Dorsolateral prefrontal cortex (tissue), 120 donors: ENCODE measurements at regions of chr7 and their contacts with region 1.

Region 1: GRCh38 chr7:123534383-123535260 is at the start of gene IQUB:
- DNase-seq: peak; percentile 90 to 97 (median 96)
- H3K4me3 ChIP-seq: peak within 1 kb of the TSS; percentile 41 to 82 (median 71)
- H3K27ac ChIP-seq: peak within 1 kb of the TSS in 52 of 59 donors; percentile 4 to 89 (median 74)
- H3K27me3 ChIP-seq: no peaks in the 10 kb centered on the region
- CTCF ChIP-seq: peak in 7 of 56 donors; percentile 3 to 46 (median 15)
- total RNA-seq, gene IQUB: 2.3 to 9.4 (median 5.3) TPM

Region 2: DNA sequence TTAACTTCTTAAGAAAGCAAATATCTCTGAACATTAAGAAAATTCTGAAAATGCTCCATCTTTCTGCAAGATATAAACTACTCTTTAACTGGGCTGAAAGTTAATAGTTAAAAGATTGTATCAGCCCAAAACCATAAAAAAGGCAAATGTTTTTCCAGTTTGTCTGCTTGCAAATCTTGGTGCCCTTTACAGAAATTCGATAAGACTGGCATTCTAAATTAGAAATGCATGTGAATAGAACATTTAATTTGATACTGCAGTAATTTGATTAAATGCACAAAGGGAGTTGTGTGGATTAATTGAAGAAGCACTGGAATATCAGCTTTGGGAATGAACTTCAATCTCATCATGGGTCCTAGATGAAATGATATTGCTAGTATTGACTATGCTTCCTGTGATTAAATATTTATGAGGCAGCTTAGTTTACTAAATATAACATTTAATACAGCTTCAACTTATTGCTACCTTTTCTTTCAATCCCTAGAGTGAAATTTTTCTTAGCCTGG is 78.6 kb before region 1 on chr7:
- intact Hi-C with region 1: no loop called
- DNase-seq: no peak
- H3K4me3 ChIP-seq: no peak overlapping the region
- H3K27ac ChIP-seq: no peak overlapping the region
- H3K27me3 ChIP-seq: no peaks in the 10 kb centered on the region
- CTCF ChIP-seq: no peak

Region 3: GRCh38 chr7:123494193-123494796 is 40.3 kb before region 1 on chr7:
- intact Hi-C with region 1: loop called (anchors 5 kb)
- DNase-seq: peak in 2 of 10 donors; percentile 5 to 30
- H3K4me3 ChIP-seq: peak overlapping the region in 1 of 59 donors; percentile 5
- H3K27ac ChIP-seq: no peak overlapping the region
- H3K27me3 ChIP-seq: no peaks in the 10 kb centered on the region
- CTCF ChIP-seq: peak; percentile 54 to 86 (median 75)

Region 4: DNA sequence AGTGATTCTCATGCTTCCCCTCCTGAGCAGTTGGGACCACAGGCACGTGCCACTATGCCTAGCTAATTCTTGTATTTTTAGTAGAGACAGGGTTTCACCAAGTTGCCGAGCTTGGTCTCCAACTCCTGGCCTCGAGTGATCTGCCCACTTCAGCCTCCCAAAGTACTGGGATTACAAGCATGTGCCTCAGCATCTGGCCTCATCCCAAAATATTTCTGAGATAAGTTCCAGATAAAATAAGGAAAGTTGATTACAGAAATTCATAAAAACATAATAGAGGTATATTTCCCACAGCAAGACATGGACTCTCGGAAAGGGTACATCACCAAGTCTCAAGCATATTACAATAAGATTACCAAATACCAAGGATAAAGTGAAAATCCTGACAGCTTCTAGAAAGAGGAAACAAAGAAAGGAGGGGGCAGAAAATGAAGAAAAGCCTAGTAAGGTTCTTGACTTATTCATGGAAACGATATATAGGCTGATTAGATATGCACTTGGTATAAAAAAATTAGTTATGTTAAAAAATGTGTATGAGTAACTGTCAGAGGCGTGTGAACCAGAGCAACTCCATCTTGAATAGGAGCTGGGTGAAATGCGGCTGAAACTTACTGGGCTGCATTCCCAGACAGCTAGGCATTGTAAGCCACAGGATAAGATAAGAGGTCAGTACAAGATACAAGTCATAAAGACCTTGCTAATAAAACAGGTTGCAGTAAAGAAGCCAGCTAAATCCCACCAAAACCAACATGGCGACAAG is 35.2 kb before region 1 on chr7:
- intact Hi-C with region 1: loop called (anchors 5 kb)
- DNase-seq: no peak
- H3K4me3 ChIP-seq: no peak overlapping the region
- H3K27ac ChIP-seq: no peak overlapping the region
- H3K27me3 ChIP-seq: no peaks in the 10 kb centered on the region
- CTCF ChIP-seq: no peak

Region 5: GRCh38 chr7:123797673-123798527 is 263.3 kb after region 1 on chr7:
- intact Hi-C with region 1: no loop called
- DNase-seq: no peak
- H3K4me3 ChIP-seq: no peak overlapping the region
- H3K27ac ChIP-seq: no peak overlapping the region
- H3K27me3 ChIP-seq: no peaks in the 10 kb centered on the region
- CTCF ChIP-seq: peak; percentile 54 to 87 (median 70)